ENCODE measurements at regions of chr6 and their contacts with region 1.

Region 1: GRCh38 chr6:133916650-133917151 is 27.8 kb downstream of the TCF21 start:
- DNase-seq: peak; percentile 90
- H3K4me3 ChIP-seq: no peak overlapping the region
- H3K27ac ChIP-seq: peak overlapping the region in 1 of 4 donors; percentile 35
- H3K4me1 ChIP-seq: peaks cover 0 to 4% (median 0%) of the 10 kb centered on the region in 4 donors
- H3K27me3 ChIP-seq: peaks cover 15% of the 10 kb centered on the region
- CTCF ChIP-seq: peak; percentile 78 to 85 (median 83)
- EP300 ChIP-seq: no peak
- POLR2A ChIP-seq: no peak

Region 2: DNA sequence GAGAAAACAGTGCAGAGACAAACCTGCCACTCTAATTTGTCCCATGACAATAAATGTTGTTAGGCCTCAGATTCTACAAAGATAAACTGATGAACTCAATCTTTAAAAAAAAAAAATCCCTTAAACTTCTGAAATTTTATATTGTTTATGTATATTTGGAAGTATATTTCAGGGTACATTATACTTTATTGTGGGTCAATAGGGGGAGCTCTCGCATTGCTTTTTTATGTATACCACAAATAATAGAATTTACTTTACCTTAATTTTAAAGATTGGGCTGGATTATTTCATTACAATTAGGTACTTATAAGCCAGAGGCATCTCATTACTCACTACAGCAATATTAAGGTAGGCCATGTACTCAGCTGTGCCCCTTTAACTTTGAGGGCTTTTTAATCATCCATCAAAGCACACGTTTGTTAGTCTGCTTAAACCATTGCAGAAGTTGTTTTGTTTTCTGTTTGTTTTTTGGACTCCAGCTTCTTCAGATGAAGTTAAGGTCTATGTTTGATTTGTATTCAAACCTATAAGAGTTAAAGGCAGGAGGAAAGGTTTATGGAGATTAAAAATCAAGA is 731.8 kb before region 1 on chr6:
- in situ Hi-C with region 1: loop called in 1 of 4 experiments (anchors 25 kb)
- intact Hi-C with region 1: no loop called
- DNase-seq: no peak
- H3K4me3 ChIP-seq: no peak overlapping the region
- H3K27ac ChIP-seq: no peak overlapping the region
- H3K4me1 ChIP-seq: no peaks in the 10 kb centered on the region
- H3K27me3 ChIP-seq: no peaks in the 10 kb centered on the region
- CTCF ChIP-seq: peak in 4 of 5 experiments; percentile 16 to 49 (median 30)
- EP300 ChIP-seq: no peak
- POLR2A ChIP-seq: no peak

Region 3: GRCh38 chr6:133568970-133569889 is 347.5 kb before region 1 on chr6:
- in situ Hi-C with region 1: loop called in 3 of 4 experiments (anchors 10 to 25 kb)
- intact Hi-C with region 1: loop called (anchors 2 kb)
- DNase-seq: peak; percentile 14
- H3K4me3 ChIP-seq: peak overlapping the region in 3 of 4 donors; percentile 1 to 37 (median 8)
- H3K27ac ChIP-seq: peak overlapping the region in 3 of 4 donors; percentile 38 to 61 (median 46)
- H3K4me1 ChIP-seq: peaks cover 0 to 6% (median 0%) of the 10 kb centered on the region in 4 donors
- H3K27me3 ChIP-seq: peaks cover 5% of the 10 kb centered on the region
- CTCF ChIP-seq: peak; percentile 69 to 92 (median 81)
- EP300 ChIP-seq: no peak
- POLR2A ChIP-seq: no peak

Region 4: GRCh38 chr6:133577851-133578250 is 338.9 kb before region 1 on chr6:
- in situ Hi-C with region 1: loop called in 3 of 4 experiments (anchors 5 to 25 kb)
- intact Hi-C with region 1: no loop called
- DNase-seq: no peak
- H3K4me3 ChIP-seq: no peak overlapping the region
- H3K27ac ChIP-seq: no peak overlapping the region
- H3K4me1 ChIP-seq: no peaks in the 10 kb centered on the region
- H3K27me3 ChIP-seq: no peaks in the 10 kb centered on the region
- CTCF ChIP-seq: no peak
- EP300 ChIP-seq: no peak
- POLR2A ChIP-seq: no peak